Head of caudate nucleus (tissue), 42 donors: ENCODE measurements at regions of chr1 and their contacts with region 1.

Region 1: GRCh38 chr1:113042285-113043143 is 30.5 kb upstream of the LRIG2 start:
- DNase-seq: peak; percentile 36 to 94 (median 83)

Region 2: DNA sequence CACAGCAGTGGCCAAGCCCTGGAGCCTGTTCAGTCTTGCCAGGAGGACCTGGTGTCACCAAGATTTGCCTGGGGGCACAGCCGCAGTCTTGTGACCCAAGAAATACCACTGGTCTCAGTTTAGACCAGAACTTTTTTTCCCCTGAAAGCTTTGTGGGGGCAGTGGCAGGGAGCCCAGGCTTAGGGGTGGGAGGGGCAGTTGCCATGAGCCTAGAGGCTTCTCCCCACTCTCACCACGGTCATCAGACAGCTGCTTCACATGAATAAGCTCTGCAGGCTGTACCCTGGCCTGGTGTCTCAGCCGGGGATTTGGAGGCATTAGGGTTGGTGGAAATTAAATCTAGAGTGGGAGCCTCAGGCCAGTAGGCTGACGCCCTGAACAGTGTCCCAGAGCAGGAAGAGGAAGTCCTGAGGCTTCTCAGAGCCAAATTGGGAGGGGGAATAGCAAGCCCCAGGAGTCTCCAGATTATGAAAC is 160.2 kb before region 1 on chr1:
- intact Hi-C with region 1: loop called (anchors 5 kb)
- DNase-seq: no peak

Region 3: DNA sequence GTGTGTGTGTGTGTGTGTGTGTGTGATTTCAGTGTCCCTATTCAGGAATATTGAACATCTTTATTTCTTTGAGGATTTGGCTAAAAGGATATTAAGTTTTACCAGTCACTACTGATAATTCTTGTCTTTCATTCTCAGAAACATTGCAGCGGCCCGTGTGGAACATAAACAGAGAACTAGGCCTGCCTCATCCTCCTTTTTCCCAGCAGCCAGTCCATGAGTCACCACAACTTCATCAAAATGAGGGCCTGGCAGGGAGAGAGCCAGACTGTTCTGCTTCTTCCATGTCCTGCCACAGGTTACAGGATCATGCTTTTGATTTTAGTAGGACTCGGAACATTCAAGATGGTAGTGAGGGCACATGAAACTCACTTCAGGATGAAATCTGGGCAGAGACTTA is 81.2 kb after region 1 on chr1:
- intact Hi-C with region 1: no loop called
- DNase-seq: peak in 1 of 42 donors; percentile 40